ENCODE measurements at regions of chr7 and their contacts with region 1.

Region 1: DNA sequence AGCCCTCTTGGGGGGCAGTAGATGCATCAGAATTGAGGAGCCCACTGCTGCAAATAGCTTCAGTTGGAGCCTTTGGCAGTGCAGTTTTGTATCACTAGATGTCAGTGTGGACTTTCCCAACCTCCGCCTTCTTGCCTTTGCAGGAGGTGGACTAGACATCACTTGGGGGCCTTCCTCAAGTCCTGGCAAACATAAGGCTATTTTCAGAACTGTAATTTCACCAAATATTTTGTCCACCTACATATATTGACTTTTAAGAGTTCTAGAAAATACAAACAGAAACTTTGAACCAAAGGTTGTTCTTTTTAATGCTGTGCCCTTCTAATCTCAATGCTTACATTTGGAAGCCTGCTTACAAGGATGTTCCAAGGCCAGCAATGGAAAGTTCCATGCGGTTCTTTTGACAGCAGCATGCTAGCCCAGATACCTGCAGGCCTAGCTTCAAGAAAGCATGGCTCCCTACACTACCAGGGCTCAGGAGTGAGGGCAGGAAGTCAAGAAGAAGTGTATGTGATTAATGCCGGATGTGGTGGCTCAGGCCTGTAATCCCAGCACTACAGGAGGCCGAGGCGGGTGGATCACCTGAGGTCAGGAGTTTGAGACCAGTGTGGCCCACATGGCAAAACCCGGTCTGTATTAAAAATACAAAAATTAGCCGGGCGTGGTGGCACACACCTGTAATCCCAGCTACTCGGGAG is 8.0 kb upstream of the ZNRF2 start:
- DNase-seq: peak; percentile 67
- ATAC-seq: peak; percentile 93
- H3K4me3 ChIP-seq: no peak overlapping the region
- H3K27ac ChIP-seq: no peak overlapping the region
- H3K4me1 ChIP-seq: peaks cover 48% of the 10 kb centered on the region
- H3K27me3 ChIP-seq: no peaks in the 10 kb centered on the region
- CTCF ChIP-seq: peak; percentile 88
- EP300 ChIP-seq: peak in 1 of 2 experiments; percentile 34; a peak in 2 of 4 replicates
- POLR2A ChIP-seq: no peak
- RAD21 ChIP-seq: peak; percentile 76

Region 2: GRCh38 chr7:30116771-30117170 is 159.6 kb before region 1 on chr7:
- CTCF ChIA-PET with region 1: no interaction called
- POLR2A ChIA-PET with region 1: no interaction called
- in situ Hi-C with region 1: no loop called
- intact Hi-C with region 1: no loop called
- DNase-seq: no peak
- ATAC-seq: no peak
- H3K4me3 ChIP-seq: no peak overlapping the region
- H3K27ac ChIP-seq: no peak overlapping the region
- H3K4me1 ChIP-seq: no peaks in the 10 kb centered on the region
- H3K27me3 ChIP-seq: no peaks in the 10 kb centered on the region
- CTCF ChIP-seq: no peak
- EP300 ChIP-seq: no peak
- POLR2A ChIP-seq: no peak
- RAD21 ChIP-seq: no peak

Region 3: DNA sequence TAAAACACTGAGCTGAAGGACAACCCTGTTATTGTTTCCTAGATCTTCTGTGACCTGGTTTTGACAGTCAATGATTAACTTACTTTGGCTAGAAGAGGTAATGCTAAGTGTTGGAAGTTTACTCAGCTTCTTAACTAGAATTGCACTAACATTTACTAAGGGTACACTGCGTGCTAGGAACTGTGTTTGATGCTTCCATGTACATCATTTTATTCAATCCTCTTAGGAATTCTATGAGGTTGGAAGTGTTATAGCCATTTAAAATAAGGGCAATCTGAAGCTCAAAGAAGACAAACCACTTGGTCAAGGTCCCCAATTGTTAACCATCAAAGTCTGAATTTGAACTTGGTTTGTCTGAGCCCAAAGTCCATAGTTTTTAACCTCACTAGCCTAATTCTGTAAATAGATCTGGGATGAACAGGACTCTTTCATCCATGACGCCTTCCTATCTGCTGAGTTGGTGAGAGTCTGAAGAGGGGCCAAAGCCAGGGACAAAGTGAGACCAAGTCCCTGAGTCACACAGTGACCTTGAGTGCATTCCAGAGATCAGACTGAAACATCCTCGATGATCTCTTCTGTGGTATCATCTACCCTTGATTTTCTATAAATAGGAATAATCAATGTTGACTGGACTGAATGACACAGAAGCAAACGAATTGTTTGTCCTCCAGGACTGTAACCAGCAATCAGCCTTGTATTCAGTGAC is 21.1 kb before region 1 on chr7:
- CTCF ChIA-PET with region 1: no interaction called
- POLR2A ChIA-PET with region 1: no interaction called
- in situ Hi-C with region 1: no loop called
- intact Hi-C with region 1: loop called (anchors 2 kb)
- DNase-seq: peak; percentile 98
- ATAC-seq: peak; percentile 90
- H3K4me3 ChIP-seq: peak overlapping the region in 1 of 3 experiments; percentile 50; a peak in 1 of 6 replicates
- H3K27ac ChIP-seq: peak overlapping the region; percentile 72
- H3K4me1 ChIP-seq: peaks cover 57% of the 10 kb centered on the region
- H3K27me3 ChIP-seq: no peaks in the 10 kb centered on the region
- CTCF ChIP-seq: no peak; the same call in 1 of the 2 replicates
- EP300 ChIP-seq: peak; percentile 33 to 84; a peak in 2 of 4 replicates
- POLR2A ChIP-seq: no peak
- RAD21 ChIP-seq: 0 out of 2 replicates have a peak, but pooled peaks have one; percentile 30

Region 4: DNA sequence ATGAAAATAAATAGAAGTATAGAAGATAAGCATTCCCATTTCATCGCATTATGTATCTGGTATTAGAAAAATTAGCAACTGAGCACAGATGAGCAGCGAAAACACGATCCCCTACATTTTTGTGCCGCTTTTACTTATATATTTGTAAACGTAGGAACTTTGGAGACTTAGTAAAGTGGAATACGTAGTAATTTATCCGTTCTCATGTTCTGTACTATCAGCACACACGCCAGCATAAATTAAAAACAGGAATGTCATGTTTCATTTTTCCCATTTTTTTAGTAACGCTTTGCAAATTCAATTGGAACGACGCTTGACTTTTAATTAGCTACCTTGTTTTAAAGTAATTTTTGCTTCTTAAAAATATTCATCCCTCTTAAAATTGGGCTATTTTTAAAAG is 10.4 kb after region 1 on chr7:
- CTCF ChIA-PET with region 1: no interaction called
- POLR2A ChIA-PET with region 1: no interaction called
- in situ Hi-C with region 1: no loop called
- intact Hi-C with region 1: no loop called
- DNase-seq: no peak
- ATAC-seq: no peak
- H3K4me3 ChIP-seq: peak overlapping the region; percentile 82 to 88 (median 87); a peak in 5 of 6 replicates
- H3K27ac ChIP-seq: no peak overlapping the region
- H3K4me1 ChIP-seq: peaks cover 61% of the 10 kb centered on the region
- H3K27me3 ChIP-seq: no peaks in the 10 kb centered on the region
- CTCF ChIP-seq: no peak
- EP300 ChIP-seq: no peak
- POLR2A ChIP-seq: no peak
- RAD21 ChIP-seq: no peak

Region 5: DNA sequence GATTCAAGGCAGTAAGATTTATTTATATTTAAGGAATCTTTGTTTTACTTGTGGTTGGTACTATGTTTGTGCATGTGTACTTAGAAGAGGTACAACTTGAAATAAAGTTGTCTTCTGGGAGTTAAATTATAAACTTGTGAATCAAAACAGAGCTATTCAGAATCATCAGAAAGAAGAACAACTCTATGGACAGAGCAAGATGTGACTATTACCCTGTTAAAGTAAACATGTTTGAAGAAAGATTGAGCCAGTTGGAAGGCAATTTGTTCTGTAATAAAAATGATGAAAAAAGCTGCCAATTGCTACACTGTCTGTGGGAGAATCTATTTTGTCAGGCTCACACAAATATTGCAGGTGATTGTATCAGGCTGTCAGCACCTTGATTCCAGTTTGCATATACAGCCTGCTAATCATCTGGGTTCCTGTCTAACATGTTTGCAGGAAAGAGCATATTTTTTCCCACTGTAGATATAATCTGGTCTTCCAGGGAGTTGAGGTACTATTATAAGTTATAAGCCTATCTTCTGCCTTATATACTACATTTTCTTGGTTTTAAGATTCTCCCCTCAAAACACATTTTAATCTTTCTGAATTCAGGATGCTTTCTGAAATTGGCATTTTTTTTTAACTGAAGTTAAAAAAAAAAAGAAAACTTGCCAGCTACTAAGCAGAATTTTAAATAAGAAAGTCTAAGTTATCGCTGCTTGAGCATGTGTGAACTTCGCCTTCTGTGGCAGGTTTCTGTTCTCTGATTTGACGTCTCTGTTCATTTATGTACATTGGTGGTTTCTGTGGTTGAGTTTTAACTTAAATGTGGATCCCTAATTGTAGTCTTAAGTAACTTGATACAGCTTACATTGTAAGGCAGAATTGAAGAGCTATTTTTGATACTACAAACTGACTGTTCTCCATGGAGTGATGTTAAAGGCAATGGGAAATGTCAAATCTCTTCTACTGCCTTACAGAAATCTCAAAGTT is 54.1 kb after region 1 on chr7:
- CTCF ChIA-PET with region 1: no interaction called
- POLR2A ChIA-PET with region 1: no interaction called
- in situ Hi-C with region 1: no loop called
- intact Hi-C with region 1: no loop called
- DNase-seq: no peak
- ATAC-seq: no peak
- H3K4me3 ChIP-seq: no peak overlapping the region
- H3K27ac ChIP-seq: no peak overlapping the region
- H3K4me1 ChIP-seq: peaks cover 14% of the 10 kb centered on the region
- H3K27me3 ChIP-seq: no peaks in the 10 kb centered on the region
- CTCF ChIP-seq: no peak
- EP300 ChIP-seq: no peak
- POLR2A ChIP-seq: no peak
- RAD21 ChIP-seq: no peak

Region 6: GRCh38 chr7:30688718-30689221 is 412.4 kb after region 1 on chr7:
- CTCF ChIA-PET with region 1: no interaction called
- POLR2A ChIA-PET with region 1: no interaction called
- in situ Hi-C with region 1: no loop called
- intact Hi-C with region 1: no loop called
- DNase-seq: no peak
- ATAC-seq: no peak
- H3K4me3 ChIP-seq: no peak overlapping the region
- H3K27ac ChIP-seq: no peak overlapping the region
- H3K4me1 ChIP-seq: peaks cover 1% of the 10 kb centered on the region
- H3K27me3 ChIP-seq: peaks cover 0 to 2% of the 10 kb centered on the region in 2 experiments; a peak in 1 of 5 replicates
- CTCF ChIP-seq: no peak
- EP300 ChIP-seq: no peak
- POLR2A ChIP-seq: no peak
- RAD21 ChIP-seq: no peak